Activated CD4-positive, alpha-beta T cell treated with anti-CD3 and anti-CD28 coated beads for 36 hours (primary cell): ENCODE measurements at regions of chr19 and their contacts with region 1.

Region 1: DNA sequence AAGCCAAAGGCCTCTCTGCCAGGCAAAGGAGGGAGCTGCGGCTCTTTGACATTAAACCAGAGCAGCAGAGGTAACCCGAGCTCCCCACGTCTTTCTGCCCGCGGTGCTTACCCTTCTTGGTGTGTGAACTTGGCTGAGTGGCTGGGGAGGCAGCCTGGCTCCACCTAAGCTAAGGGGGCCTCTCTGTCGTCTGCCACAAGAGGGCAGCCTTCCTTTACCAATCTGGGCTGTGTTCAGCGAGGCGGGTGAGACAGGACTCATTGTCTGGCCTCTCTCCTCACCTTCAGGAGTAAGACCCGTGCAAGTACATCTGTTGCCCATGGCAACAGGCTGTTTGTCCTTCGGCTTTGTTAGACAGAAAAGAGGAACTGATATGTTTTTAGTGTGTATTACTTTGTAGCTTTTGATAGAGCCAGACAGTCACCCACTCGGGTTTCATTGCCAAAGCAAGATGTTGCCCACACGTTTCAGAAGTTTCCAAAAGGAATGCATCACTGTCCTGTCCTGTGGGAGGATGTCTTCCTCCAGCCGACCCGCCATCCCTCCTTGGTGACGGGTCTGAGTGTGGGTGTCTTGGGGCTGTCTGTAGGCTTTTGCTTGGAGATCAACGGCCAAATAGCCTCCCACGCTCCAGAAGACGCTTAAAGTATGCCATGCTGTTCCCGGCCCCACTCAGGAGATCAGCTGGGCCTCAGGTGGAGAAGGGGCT is 4.6 kb downstream of the POP4 start:
- DNase-seq: peak; percentile 93
- ATAC-seq: peak; percentile 76
- H3K4me3 Mint-ChIP-seq: no peak overlapping the region
- H3K27ac Mint-ChIP-seq: no peak overlapping the region
- H3K4me1 Mint-ChIP-seq: peaks cover 12% of the 10 kb centered on the region
- H3K27me3 Mint-ChIP-seq: no peaks in the 10 kb centered on the region

Region 2: GRCh38 chr19:29212648-29213573 is 397.8 kb before region 1 on chr19 and contains the start of gene UQCRFS1:
- CTCF ChIA-PET with region 1: no interaction called
- POLR2A ChIA-PET with region 1: no interaction called
- intact Hi-C with region 1: loop called (anchors 1 to 5 kb)
- DNase-seq: peak; percentile 98
- ATAC-seq: peak; percentile 98
- H3K4me3 Mint-ChIP-seq: peak within 1 kb of the TSS; percentile 95
- H3K27ac Mint-ChIP-seq: peak within 1 kb of the TSS; percentile 95
- H3K4me1 Mint-ChIP-seq: peaks cover 48% of the 10 kb centered on the region
- H3K27me3 Mint-ChIP-seq: peaks cover 3% of the 10 kb centered on the region
- total RNA-seq, gene UQCRFS1: 39.1 to 45.3 TPM

Region 3: GRCh38 chr19:29622138-29623070 is 11.7 kb after region 1 on chr19:
- CTCF ChIA-PET with region 1: interaction called, 66 read pairs
- POLR2A ChIA-PET with region 1: interaction called, 3 read pairs
- intact Hi-C with region 1: loop called in 1 of 2 experiments (anchors 1 kb)
- DNase-seq: peak; percentile 65
- ATAC-seq: peak; percentile 53
- H3K4me3 Mint-ChIP-seq: peak overlapping the region; percentile 20
- H3K27ac Mint-ChIP-seq: peak overlapping the region; percentile 63
- H3K4me1 Mint-ChIP-seq: peaks cover 51% of the 10 kb centered on the region
- H3K27me3 Mint-ChIP-seq: no peaks in the 10 kb centered on the region

Region 4: GRCh38 chr19:29671393-29672160 is 60.9 kb after region 1 on chr19:
- CTCF ChIA-PET with region 1: interaction called, 51 read pairs
- POLR2A ChIA-PET with region 1: interaction called, 8 read pairs
- intact Hi-C with region 1: loop called in 1 of 2 experiments (anchors 1 kb)
- DNase-seq: peak; percentile 94
- ATAC-seq: peak; percentile 70
- H3K4me3 Mint-ChIP-seq: peak overlapping the region; percentile 59
- H3K27ac Mint-ChIP-seq: peak overlapping the region; percentile 96
- H3K4me1 Mint-ChIP-seq: peaks cover 90% of the 10 kb centered on the region
- H3K27me3 Mint-ChIP-seq: no peaks in the 10 kb centered on the region

Region 5: GRCh38 chr19:29704562-29705558 is 94.1 kb after region 1 on chr19:
- CTCF ChIA-PET with region 1: interaction called, 11 read pairs
- POLR2A ChIA-PET with region 1: no interaction called
- intact Hi-C with region 1: no loop called
- DNase-seq: peak; percentile 51
- ATAC-seq: peak; percentile 90
- H3K4me3 Mint-ChIP-seq: peak overlapping the region; percentile 26
- H3K27ac Mint-ChIP-seq: peak overlapping the region; percentile 97
- H3K4me1 Mint-ChIP-seq: peaks cover 49% of the 10 kb centered on the region
- H3K27me3 Mint-ChIP-seq: no peaks in the 10 kb centered on the region

Region 6: DNA sequence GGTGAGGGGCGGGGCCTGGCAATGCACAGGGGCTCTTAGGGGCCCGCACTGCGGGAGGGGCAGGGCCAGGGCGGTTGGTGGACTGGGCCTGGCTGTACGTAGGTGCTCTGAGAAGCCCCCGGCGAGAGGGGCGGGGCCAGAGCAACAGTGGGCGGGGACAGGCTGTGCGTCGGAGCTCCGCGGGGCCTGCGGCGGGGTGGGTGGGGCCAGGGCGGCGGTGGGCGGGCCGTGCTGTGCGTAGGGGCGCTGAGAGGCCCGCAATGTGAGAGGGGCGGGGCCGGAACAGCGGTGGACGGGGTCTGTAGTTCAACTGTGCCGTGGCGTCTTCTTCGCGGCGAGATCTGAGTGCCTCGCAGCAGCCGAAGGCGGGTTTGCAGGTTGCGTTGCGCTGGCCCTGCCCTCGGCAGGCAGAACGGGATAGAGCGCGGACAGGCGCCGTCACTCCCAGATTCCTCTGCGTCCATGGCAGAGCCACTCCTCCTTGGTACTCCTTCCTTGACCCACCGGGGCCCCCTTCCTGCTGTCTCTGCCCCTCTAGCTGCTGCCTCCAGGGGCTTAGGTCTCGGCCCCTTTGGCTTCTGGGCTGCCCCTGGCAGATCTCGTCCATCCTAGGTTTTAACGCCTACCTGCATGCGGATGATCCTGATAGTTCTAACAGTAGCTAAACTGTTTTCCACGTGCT is 234.3 kb after region 1 on chr19:
- CTCF ChIA-PET with region 1: interaction called, 3 read pairs
- POLR2A ChIA-PET with region 1: no interaction called
- intact Hi-C with region 1: loop called (anchors 1 to 10 kb)
- DNase-seq: peak; percentile 99
- ATAC-seq: peak; percentile 83
- H3K4me3 Mint-ChIP-seq: peak overlapping the region; percentile 83
- H3K27ac Mint-ChIP-seq: peak overlapping the region; percentile 83
- H3K4me1 Mint-ChIP-seq: peaks cover 11% of the 10 kb centered on the region
- H3K27me3 Mint-ChIP-seq: no peaks in the 10 kb centered on the region